ENCODE measurements at regions of chr4 and their contacts with region 1.

Region 1: GRCh38 chr4:27096142-27096824 is 235.6 kb downstream of the STIM2 start:
- DNase-seq: no peak

Region 2: DNA sequence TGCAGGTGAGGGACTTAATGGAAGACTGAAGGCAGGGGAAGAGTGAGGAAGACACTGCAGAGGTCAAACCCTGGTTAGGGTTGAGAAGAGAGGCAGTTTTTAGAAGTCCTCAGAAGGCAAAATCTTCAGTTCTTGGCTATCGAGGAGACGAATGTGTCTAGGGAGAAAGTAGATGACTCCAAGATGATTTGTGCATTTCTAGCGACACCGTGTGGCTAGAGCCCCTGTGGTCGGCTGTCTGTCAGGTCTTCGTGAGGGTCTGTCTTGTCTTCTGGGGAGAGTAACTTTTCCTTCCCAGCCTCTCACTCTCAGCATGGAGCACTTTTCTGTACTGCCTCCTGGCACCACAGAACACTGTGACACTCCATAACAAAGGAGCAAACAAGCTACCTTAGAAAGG is 222.5 kb after region 1 on chr4:
- intact Hi-C with region 1: loop called in 1 of 2 experiments (anchors 5 kb)
- DNase-seq: no peak

Region 3: DNA sequence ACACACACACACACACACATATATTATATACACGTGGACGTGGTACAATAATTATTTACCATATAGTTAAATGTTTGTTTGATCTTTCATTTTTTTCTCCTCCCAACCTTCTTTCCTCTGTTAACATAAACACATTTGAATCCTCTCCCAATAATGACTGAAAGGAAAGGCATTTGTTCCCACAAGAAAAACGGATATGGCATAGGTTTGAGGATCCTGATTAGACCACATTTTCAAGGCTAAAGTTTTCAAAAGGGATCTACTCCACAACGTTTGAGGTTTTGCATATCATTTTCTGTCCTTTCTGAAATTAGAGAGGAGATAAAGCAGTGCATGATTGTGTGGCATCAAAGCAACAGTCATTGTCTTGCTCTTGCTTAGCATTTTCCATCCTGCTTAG is 1647.8 kb after region 1 on chr4:
- intact Hi-C with region 1: loop called in 1 of 2 experiments (anchors 5 kb)
- DNase-seq: no peak